ENCODE measurements at regions of chr11 and their contacts with region 1.

Region 1: DNA sequence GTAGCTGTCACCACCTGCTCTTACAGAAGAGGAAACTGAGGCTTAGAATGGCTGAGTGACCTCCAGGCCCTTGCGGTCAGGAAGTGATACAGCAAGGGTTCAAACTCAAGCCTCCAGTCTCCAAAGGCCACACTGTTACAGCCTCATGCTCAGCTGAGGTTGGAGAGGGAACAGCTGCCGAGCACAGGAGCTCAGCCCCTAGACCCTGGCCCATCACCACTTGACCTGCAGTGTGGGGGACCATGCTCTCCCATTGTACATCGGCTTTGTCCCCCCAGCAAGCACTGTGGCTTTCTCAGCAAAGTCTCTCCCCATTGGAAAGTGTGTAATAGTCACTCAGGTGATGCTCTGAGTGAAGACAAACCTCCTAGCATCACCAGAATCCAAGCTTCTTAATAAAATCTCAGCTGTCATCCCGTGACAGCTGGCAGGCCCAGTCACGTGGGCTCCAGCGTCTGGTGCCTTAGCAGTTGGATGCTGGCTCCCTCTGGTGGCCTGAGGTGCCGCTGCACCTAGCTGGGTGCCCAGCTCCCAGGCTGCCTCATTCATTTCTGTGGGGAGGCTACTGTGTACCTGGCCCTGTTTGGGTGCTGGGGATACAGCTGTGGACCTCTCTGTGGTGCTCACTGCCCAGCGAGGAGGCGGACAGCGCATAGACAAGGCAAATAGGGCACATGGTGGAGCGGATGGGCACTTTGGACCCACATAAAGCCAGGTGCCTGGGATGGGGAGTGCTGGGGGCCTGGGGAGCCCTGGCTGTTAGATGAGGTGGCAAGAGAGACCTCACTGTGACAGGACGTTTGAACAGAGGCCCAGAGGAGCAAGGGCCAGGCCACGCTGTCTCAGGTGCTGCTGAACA is 19.1 kb upstream of the MYRF start:
- DNase-seq: peak; percentile 70 to 90 (median 85)
- ATAC-seq: peak; percentile 99
- H3K4me3 ChIP-seq: no peak overlapping the region
- H3K4me3 Mint-ChIP-seq: no peak overlapping the region
- H3K27ac ChIP-seq: no peak overlapping the region
- H3K27ac Mint-ChIP-seq: peak overlapping the region; percentile 17
- H3K4me1 ChIP-seq: no peaks in the 10 kb centered on the region
- H3K4me1 Mint-ChIP-seq: peaks cover 2% of the 10 kb centered on the region
- H3K27me3 ChIP-seq: no peaks in the 10 kb centered on the region
- H3K27me3 Mint-ChIP-seq: no peaks in the 10 kb centered on the region
- CTCF ChIP-seq: peak; percentile 93

Region 2: DNA sequence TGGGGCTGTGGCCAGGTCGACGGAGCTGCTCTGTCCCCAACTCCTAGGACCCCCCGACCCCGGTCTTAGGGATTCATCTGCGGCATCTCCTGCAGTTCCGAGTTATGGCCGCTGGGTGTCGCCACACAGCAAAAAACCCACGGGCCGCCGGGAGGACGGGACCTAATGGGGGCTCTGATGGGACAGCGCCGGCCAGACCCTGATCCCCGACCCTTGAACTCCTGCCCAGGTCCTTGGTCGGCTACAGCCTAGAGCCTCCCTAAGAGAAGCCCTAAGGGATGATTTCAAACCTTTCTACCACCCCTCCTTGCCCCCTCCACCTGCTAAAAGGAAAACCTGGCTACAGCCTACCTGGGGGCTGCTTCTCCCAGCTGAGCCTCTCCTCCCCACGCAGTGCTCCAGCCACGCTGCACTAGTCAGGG is 255.6 kb before region 1 on chr11:
- CTCF ChIA-PET with region 1: interaction called, 4 read pairs
- POLR2A ChIA-PET with region 1: no interaction called
- intact Hi-C with region 1: loop called in 1 of 2 experiments (anchors 1 kb)
- DNase-seq: peak; percentile 21 to 71 (median 59)
- ATAC-seq: peak; percentile 49
- H3K4me3 ChIP-seq: no peak overlapping the region
- H3K4me3 Mint-ChIP-seq: no peak overlapping the region
- H3K27ac ChIP-seq: no peak overlapping the region
- H3K27ac Mint-ChIP-seq: no peak overlapping the region
- H3K4me1 ChIP-seq: peaks cover 8% of the 10 kb centered on the region
- H3K4me1 Mint-ChIP-seq: peaks cover 8% of the 10 kb centered on the region
- H3K27me3 ChIP-seq: peaks cover 0 to 2% of the 10 kb centered on the region in 2 experiments
- H3K27me3 Mint-ChIP-seq: peaks cover 4% of the 10 kb centered on the region
- CTCF ChIP-seq: peak; percentile 78

Region 3: GRCh38 chr11:61581030-61581928 is 152.1 kb before region 1 on chr11 and contains the start of gene SYT7:
- CTCF ChIA-PET with region 1: no interaction called
- POLR2A ChIA-PET with region 1: no interaction called
- intact Hi-C with region 1: loop called in 1 of 2 experiments (anchors 5 kb)
- DNase-seq: peak; percentile 87 to 97 (median 93)
- ATAC-seq: peak; percentile 87
- H3K4me3 ChIP-seq: peak within 1 kb of the TSS; percentile 22 to 38
- H3K4me3 Mint-ChIP-seq: peak within 1 kb of the TSS; percentile 86
- H3K27ac ChIP-seq: no peak within 1 kb of the TSS
- H3K27ac Mint-ChIP-seq: peak within 1 kb of the TSS; percentile 33
- H3K4me1 ChIP-seq: peaks cover 14% of the 10 kb centered on the region
- H3K4me1 Mint-ChIP-seq: peaks cover 14% of the 10 kb centered on the region
- H3K27me3 ChIP-seq: peaks cover 13 to 20% of the 10 kb centered on the region in 2 experiments
- H3K27me3 Mint-ChIP-seq: peaks cover 36% of the 10 kb centered on the region
- CTCF ChIP-seq: no peak
- total RNA-seq, gene SYT7: not detected

Region 4: DNA sequence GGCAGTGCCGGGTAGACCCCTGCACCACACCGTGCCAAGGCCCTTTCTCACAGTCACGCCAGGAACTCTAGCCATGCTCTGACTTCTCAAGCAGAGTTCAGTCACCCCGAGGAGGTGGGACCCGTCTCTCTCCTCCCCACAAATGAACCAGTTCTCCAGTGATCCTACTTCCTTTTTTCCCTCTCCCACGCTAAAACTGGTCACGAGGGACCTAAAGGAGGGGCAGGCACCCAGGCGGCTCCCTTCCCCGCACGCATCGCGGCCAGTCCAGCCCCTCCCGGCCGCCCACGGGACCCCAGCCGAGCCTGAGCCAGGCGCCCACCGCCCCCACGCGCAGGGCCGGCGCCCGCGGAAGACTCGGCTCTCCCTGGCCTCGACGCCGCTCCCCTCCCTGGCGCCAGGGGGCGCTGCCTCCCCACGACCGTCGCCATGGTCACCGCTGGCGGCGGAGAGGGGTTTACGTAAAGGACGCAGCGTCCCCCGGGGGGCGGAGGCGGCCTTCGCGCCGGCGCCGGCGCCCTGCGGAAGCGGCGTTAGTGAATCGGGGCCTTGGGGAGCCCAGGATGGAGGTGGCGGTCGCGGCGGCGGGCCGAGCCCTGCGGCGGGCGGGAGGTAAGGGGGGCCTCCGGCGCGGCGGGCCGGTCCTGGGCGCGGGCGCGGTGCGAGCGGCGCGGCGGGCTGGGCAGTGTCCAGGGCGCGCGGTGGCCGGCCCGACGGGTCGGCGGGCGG is 53.3 kb before region 1 on chr11 and contains the start of gene DAGLA:
- CTCF ChIA-PET with region 1: interaction called, 43 read pairs
- POLR2A ChIA-PET with region 1: no interaction called
- intact Hi-C with region 1: loop called (anchors 1 kb)
- DNase-seq: peak; percentile 60 to 91 (median 81)
- ATAC-seq: peak; percentile 89
- H3K4me3 ChIP-seq: peak within 1 kb of the TSS in 1 of 2 experiments; percentile 27
- H3K4me3 Mint-ChIP-seq: peak within 1 kb of the TSS; percentile 75
- H3K27ac ChIP-seq: no peak within 1 kb of the TSS
- H3K27ac Mint-ChIP-seq: no peak within 1 kb of the TSS
- H3K4me1 ChIP-seq: peaks cover 22% of the 10 kb centered on the region
- H3K4me1 Mint-ChIP-seq: peaks cover 8% of the 10 kb centered on the region
- H3K27me3 ChIP-seq: peaks cover 0 to 8% of the 10 kb centered on the region in 2 experiments
- H3K27me3 Mint-ChIP-seq: peaks cover 21% of the 10 kb centered on the region
- CTCF ChIP-seq: peak; percentile 80
- total RNA-seq, gene DAGLA: 0.06 to 0.08 TPM

Region 5: DNA sequence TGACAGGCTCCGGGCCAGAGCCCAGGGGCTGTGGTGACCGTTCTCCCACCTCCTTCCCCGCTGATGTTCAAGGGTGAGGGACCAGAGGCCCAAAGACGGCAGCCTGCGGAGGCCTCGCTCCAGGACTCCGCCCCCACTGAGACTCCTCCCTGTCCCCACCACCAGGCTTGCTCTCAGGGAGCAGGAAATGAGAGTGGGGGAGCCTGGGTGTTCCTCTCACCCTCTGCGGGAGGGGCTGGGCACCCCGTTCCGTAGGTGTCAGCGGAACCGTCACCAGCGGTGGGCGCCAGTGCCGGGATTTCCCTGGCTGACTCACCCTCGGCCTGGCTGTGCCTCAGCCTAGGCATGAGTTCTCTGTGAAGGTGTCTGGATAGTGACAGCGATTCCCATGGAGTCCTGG is 37.4 kb before region 1 on chr11:
- CTCF ChIA-PET with region 1: interaction called, 17 read pairs
- POLR2A ChIA-PET with region 1: no interaction called
- intact Hi-C with region 1: loop called (anchors 1 kb)
- DNase-seq: peak; percentile 80 to 97 (median 90)
- ATAC-seq: peak; percentile 99
- H3K4me3 ChIP-seq: peak overlapping the region; percentile 21 to 52
- H3K4me3 Mint-ChIP-seq: peak overlapping the region; percentile 55
- H3K27ac ChIP-seq: peak overlapping the region in 1 of 2 experiments; percentile 14
- H3K27ac Mint-ChIP-seq: peak overlapping the region; percentile 79
- H3K4me1 ChIP-seq: peaks cover 36% of the 10 kb centered on the region
- H3K4me1 Mint-ChIP-seq: peaks cover 25% of the 10 kb centered on the region
- H3K27me3 ChIP-seq: no peaks in the 10 kb centered on the region
- H3K27me3 Mint-ChIP-seq: no peaks in the 10 kb centered on the region
- CTCF ChIP-seq: no peak

Region 6: GRCh38 chr11:61718621-61719302 is 14.6 kb before region 1 on chr11:
- CTCF ChIA-PET with region 1: interaction called, 20 read pairs
- POLR2A ChIA-PET with region 1: no interaction called
- intact Hi-C with region 1: no loop called
- DNase-seq: no peak
- ATAC-seq: no peak
- H3K4me3 ChIP-seq: no peak overlapping the region
- H3K4me3 Mint-ChIP-seq: no peak overlapping the region
- H3K27ac ChIP-seq: no peak overlapping the region
- H3K27ac Mint-ChIP-seq: no peak overlapping the region
- H3K4me1 ChIP-seq: no peaks in the 10 kb centered on the region
- H3K4me1 Mint-ChIP-seq: no peaks in the 10 kb centered on the region
- H3K27me3 ChIP-seq: no peaks in the 10 kb centered on the region
- H3K27me3 Mint-ChIP-seq: no peaks in the 10 kb centered on the region
- CTCF ChIP-seq: no peak

Region 7: GRCh38 chr11:61747192-61747966 is 14.0 kb after region 1 on chr11:
- CTCF ChIA-PET with region 1: interaction called, 13 read pairs
- POLR2A ChIA-PET with region 1: no interaction called
- intact Hi-C with region 1: no loop called
- DNase-seq: peak in 6 of 9 experiments; percentile 22 to 56 (median 45)
- ATAC-seq: peak; percentile 34
- H3K4me3 ChIP-seq: no peak overlapping the region
- H3K4me3 Mint-ChIP-seq: no peak overlapping the region
- H3K27ac ChIP-seq: no peak overlapping the region
- H3K27ac Mint-ChIP-seq: no peak overlapping the region
- H3K4me1 ChIP-seq: peaks cover 6% of the 10 kb centered on the region
- H3K4me1 Mint-ChIP-seq: peaks cover 5% of the 10 kb centered on the region
- H3K27me3 ChIP-seq: peaks cover 3% of the 10 kb centered on the region in 2 experiments
- H3K27me3 Mint-ChIP-seq: peaks cover 21% of the 10 kb centered on the region
- CTCF ChIP-seq: peak; percentile 62